IMR-90 (cell line): ENCODE measurements at regions of chr1 and their contacts with region 1.

Region 1: DNA sequence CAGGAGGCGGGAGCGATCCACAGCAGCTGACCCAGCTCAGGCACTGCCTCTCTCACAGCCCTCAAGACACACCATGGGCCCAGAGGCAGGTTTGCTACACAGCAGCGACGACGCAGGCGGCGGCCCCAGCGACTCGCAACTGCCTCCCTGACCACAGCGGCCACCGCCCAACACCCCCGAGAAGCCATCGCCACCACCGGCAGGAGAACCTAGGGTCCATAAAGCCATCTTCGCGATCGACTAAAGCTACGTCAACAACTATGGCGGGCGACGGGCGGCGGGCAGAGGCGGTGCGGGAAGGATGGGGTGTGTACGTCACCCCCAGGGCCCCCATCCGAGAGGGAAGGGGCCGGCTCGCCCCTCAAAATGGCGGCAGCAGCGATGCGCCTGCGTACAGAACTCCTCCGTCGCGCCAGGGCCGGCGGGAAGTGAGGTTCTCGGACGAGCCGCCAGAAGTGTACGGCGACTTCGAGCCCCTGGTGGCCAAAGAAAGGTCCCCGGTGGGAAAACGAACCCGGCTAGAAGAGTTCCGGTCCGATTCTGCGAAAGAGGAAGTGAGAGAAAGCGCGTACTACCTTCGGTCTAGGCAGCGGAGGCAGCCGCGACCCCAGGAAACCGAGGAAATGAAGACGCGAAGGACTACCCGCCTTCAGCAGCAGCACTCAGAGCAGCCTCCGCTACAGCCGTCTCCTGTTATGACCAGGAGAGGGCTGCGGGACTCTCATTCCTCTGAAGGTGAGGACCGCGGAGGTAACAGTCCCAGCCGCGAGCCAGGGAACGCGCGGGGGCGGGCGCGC is at the start of gene TOR1AIP1:
- DNase-seq: peak; percentile 97
- ATAC-seq: peak; percentile 87
- H3K4me3 ChIP-seq: peak within 1 kb of the TSS; percentile 68
- H3K27ac ChIP-seq: peak within 1 kb of the TSS; percentile 94
- H3K4me1 ChIP-seq: no peaks in the 10 kb centered on the region
- H3K27me3 ChIP-seq: no peaks in the 10 kb centered on the region
- CTCF ChIP-seq: 0 out of 2 replicates have a peak, but pooled peaks have one; percentile 17
- POLR2A ChIP-seq: peak; percentile 97
- RAD21 ChIP-seq: no peak
- total RNA-seq, gene TOR1AIP1: 36.7 and 64.5 TPM in 2 replicates

Region 2: GRCh38 chr1:179954493-179955297 is 72.3 kb after region 1 on chr1 and contains the start of gene CEP350:
- CTCF ChIA-PET with region 1: no interaction called
- POLR2A ChIA-PET with region 1: no interaction called
- dilution Hi-C with region 1: no loop called
- in situ Hi-C with region 1: no loop called
- intact Hi-C with region 1: loop called (anchors 5 kb)
- DNase-seq: peak; percentile 99
- ATAC-seq: peak; percentile 96
- H3K4me3 ChIP-seq: peak within 1 kb of the TSS; percentile 76
- H3K27ac ChIP-seq: peak within 1 kb of the TSS; percentile 84
- H3K4me1 ChIP-seq: peaks cover 2% of the 10 kb centered on the region; the same call in 1 of the 2 replicates
- H3K27me3 ChIP-seq: no peaks in the 10 kb centered on the region
- CTCF ChIP-seq: no peak
- POLR2A ChIP-seq: peak; percentile 70
- RAD21 ChIP-seq: no peak
- total RNA-seq, gene CEP350: 36.4 and 55.8 TPM in 2 replicates

Region 3: DNA sequence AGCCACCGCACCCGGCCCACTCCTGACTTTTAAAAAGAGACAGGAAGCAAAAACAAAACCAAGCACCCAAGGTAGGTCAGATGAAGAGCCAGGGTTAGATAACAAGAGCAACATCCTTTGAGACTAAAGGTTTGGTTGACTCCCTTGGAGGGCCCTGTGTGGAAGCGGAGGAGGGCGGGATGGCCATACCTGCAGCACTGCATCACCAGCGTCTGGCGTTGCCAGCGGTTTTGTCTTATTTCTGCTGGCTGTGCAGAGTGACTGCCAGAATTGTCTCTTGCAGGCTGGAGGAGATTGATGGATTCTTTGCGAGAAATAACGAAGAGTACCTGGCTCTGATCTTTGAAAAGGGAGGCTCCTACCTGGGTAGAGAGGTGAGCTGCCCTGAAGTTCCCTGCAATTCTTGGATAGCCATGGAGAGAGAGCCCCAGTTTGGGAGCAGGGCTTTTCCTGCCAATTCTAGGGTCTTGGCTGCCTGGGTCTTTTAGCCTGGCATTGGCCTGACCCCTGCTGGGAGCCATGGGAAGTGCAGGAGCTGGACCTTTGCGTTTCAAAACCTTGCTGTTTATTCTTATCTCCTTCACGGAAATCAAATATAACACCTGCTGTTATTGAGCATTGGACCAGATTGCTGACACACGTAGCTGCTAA is 296.2 kb after region 1 on chr1:
- CTCF ChIA-PET with region 1: no interaction called
- POLR2A ChIA-PET with region 1: no interaction called
- dilution Hi-C with region 1: no loop called
- in situ Hi-C with region 1: loop called (anchors 10 kb)
- intact Hi-C with region 1: loop called (anchors 5 kb)
- DNase-seq: peak; percentile 43
- ATAC-seq: peak; percentile 24; the same call in 1 of the 2 replicates
- H3K4me3 ChIP-seq: no peak overlapping the region
- H3K27ac ChIP-seq: no peak overlapping the region
- H3K4me1 ChIP-seq: peaks cover 2% of the 10 kb centered on the region; the same call in 1 of the 2 replicates
- H3K27me3 ChIP-seq: no peaks in the 10 kb centered on the region
- CTCF ChIP-seq: peak; percentile 82
- POLR2A ChIP-seq: no peak
- RAD21 ChIP-seq: peak; percentile 93

Region 4: GRCh38 chr1:180188091-180188506 is 305.7 kb after region 1 on chr1:
- CTCF ChIA-PET with region 1: no interaction called
- POLR2A ChIA-PET with region 1: no interaction called
- dilution Hi-C with region 1: no loop called
- in situ Hi-C with region 1: loop called (anchors 10 kb)
- intact Hi-C with region 1: no loop called
- DNase-seq: peak; percentile 35
- ATAC-seq: peak; percentile 45
- H3K4me3 ChIP-seq: no peak overlapping the region
- H3K27ac ChIP-seq: no peak overlapping the region
- H3K4me1 ChIP-seq: no peaks in the 10 kb centered on the region
- H3K27me3 ChIP-seq: no peaks in the 10 kb centered on the region
- CTCF ChIP-seq: peak; percentile 50
- POLR2A ChIP-seq: no peak
- RAD21 ChIP-seq: peak; percentile 61

Region 5: GRCh38 chr1:180468311-180468710 is 585.9 kb after region 1 on chr1:
- CTCF ChIA-PET with region 1: no interaction called
- POLR2A ChIA-PET with region 1: no interaction called
- dilution Hi-C with region 1: no loop called
- in situ Hi-C with region 1: no loop called
- intact Hi-C with region 1: loop called (anchors 10 kb)
- DNase-seq: no peak
- ATAC-seq: no peak
- H3K4me3 ChIP-seq: no peak overlapping the region
- H3K27ac ChIP-seq: no peak overlapping the region
- H3K4me1 ChIP-seq: no peaks in the 10 kb centered on the region
- H3K27me3 ChIP-seq: no peaks in the 10 kb centered on the region
- CTCF ChIP-seq: no peak
- POLR2A ChIP-seq: no peak
- RAD21 ChIP-seq: no peak

Region 6: DNA sequence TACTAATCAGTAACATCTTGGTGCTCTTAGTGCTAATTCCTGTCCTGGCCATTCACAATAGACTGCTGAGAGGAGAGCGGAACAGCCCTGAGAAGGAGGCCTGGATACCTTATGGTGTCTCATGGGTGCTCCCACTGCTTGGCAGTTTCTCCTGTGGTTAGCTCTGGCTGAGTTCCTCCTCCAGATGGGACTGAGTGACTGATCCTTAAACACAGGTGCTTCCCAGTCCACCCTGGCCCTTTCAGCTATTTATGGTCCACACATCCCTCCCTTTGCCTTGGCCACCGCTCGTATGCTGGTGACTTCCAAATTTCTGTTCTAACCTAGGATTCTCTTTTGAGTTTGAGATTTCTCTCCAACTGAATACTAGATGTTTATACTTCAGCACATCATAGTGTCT is 1443.9 kb after region 1 on chr1:
- CTCF ChIA-PET with region 1: no interaction called
- POLR2A ChIA-PET with region 1: no interaction called
- dilution Hi-C with region 1: no loop called
- in situ Hi-C with region 1: no loop called
- intact Hi-C with region 1: no loop called
- DNase-seq: no peak
- ATAC-seq: no peak
- H3K4me3 ChIP-seq: no peak overlapping the region
- H3K27ac ChIP-seq: no peak overlapping the region
- H3K4me1 ChIP-seq: no peaks in the 10 kb centered on the region
- H3K27me3 ChIP-seq: 0 out of 2 replicates have a peak, but pooled peaks cover under 1% of the 10 kb centered on the region
- CTCF ChIP-seq: no peak
- POLR2A ChIP-seq: no peak
- RAD21 ChIP-seq: no peak